ENCODE measurements at regions of chr7 and their contacts with region 1.

Region 1: DNA sequence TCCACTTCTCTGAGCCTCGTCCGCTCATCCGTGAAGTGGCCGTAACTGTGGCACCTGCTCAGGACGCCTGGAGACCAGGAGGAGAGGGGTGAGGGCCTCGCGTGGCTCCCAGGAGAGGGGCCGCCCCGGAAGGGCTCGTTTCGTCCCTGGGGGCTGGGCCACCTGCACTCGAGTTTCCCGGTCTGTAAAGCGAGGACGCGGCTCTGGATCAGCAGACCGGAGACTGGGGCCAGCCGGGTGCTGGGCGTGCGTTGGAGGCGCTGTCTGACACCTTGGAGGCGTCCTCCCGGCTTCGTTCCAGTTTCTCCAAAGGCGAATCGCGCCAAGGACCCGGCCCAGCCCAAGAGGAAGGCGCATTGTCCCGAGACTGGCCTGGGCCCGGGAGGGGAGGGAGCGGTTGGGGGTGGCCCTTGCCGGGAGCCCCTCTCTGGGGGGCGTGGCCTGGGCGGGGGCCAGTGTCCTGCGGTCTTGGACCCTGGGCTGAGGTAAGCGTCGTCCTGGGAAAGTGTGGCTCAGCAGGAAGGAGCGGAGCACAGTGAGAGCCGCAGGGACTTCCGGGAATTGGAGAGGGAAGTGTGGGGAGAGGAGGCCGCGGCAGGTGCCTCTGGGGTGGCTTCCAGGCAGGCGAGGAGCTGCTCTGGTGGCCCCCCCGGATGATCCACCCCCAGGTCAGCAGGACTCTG is 89.6 kb downstream of the FOXL3 start:
- DNase-seq: peak in 3 of 9 donors; percentile 3 to 21 (median 10)
- ATAC-seq: no peak
- H3K4me3 ChIP-seq: peak overlapping the region; percentile 20
- H3K4me3 Mint-ChIP-seq: peak overlapping the region in 9 of 10 donors; percentile 18 to 84 (median 76)
- H3K27ac ChIP-seq: no peak overlapping the region
- H3K27ac Mint-ChIP-seq: peak overlapping the region in 3 of 9 donors; percentile 47 to 60 (median 55)
- H3K4me1 ChIP-seq: peaks cover 19 to 32% of the 10 kb centered on the region in 2 donors
- H3K4me1 Mint-ChIP-seq: peaks cover 17 to 37% (median 23%) of the 10 kb centered on the region in 7 donors
- H3K27me3 ChIP-seq: no peaks in the 10 kb centered on the region
- H3K27me3 Mint-ChIP-seq: peaks cover 0 to 28% (median 0%) of the 10 kb centered on the region in 5 donors

Region 2: GRCh38 chr7:220151-220841 is 159.3 kb before region 1 on chr7:
- CTCF ChIA-PET with region 1: no interaction called
- POLR2A ChIA-PET with region 1: no interaction called
- intact Hi-C with region 1: no loop called
- DNase-seq: no peak
- ATAC-seq: no peak
- H3K4me3 ChIP-seq: no peak overlapping the region
- H3K4me3 Mint-ChIP-seq: no peak overlapping the region
- H3K27ac ChIP-seq: no peak overlapping the region
- H3K27ac Mint-ChIP-seq: no peak overlapping the region
- H3K4me1 ChIP-seq: no peaks in the 10 kb centered on the region
- H3K4me1 Mint-ChIP-seq: peaks cover 0 to 6% (median 0%) of the 10 kb centered on the region in 7 donors
- H3K27me3 ChIP-seq: no peaks in the 10 kb centered on the region
- H3K27me3 Mint-ChIP-seq: no peaks in the 10 kb centered on the region

Region 3: GRCh38 chr7:353746-354325 is 25.8 kb before region 1 on chr7:
- CTCF ChIA-PET with region 1: no interaction called
- POLR2A ChIA-PET with region 1: interaction called, 5 read pairs
- intact Hi-C with region 1: loop called in 1 of 2 experiments (anchors 1 kb)
- DNase-seq: no peak
- ATAC-seq: no peak
- H3K4me3 ChIP-seq: no peak overlapping the region
- H3K4me3 Mint-ChIP-seq: no peak overlapping the region
- H3K27ac ChIP-seq: no peak overlapping the region
- H3K27ac Mint-ChIP-seq: no peak overlapping the region
- H3K4me1 ChIP-seq: peaks cover 10 to 11% of the 10 kb centered on the region in 2 donors
- H3K4me1 Mint-ChIP-seq: peaks cover 10 to 27% (median 21%) of the 10 kb centered on the region in 7 donors
- H3K27me3 ChIP-seq: no peaks in the 10 kb centered on the region
- H3K27me3 Mint-ChIP-seq: peaks cover 0 to 3% (median 0%) of the 10 kb centered on the region in 5 donors

Region 4: GRCh38 chr7:362402-363096 is 17.0 kb before region 1 on chr7:
- CTCF ChIA-PET with region 1: no interaction called
- POLR2A ChIA-PET with region 1: interaction called, 12 read pairs
- intact Hi-C with region 1: loop called in 1 of 2 experiments (anchors 1 kb)
- DNase-seq: peak in 7 of 9 donors; percentile 57 to 70 (median 61)
- ATAC-seq: peak; percentile 68
- H3K4me3 ChIP-seq: peak overlapping the region; percentile 38
- H3K4me3 Mint-ChIP-seq: peak overlapping the region; percentile 71 to 85 (median 76)
- H3K27ac ChIP-seq: peak overlapping the region; percentile 68
- H3K27ac Mint-ChIP-seq: peak overlapping the region; percentile 86 to 98 (median 94)
- H3K4me1 ChIP-seq: peaks cover 29 to 72% of the 10 kb centered on the region in 2 donors
- H3K4me1 Mint-ChIP-seq: peaks cover 52 to 89% (median 73%) of the 10 kb centered on the region in 7 donors
- H3K27me3 ChIP-seq: no peaks in the 10 kb centered on the region
- H3K27me3 Mint-ChIP-seq: peaks cover 0 to 5% (median 0%) of the 10 kb centered on the region in 5 donors

Region 5: DNA sequence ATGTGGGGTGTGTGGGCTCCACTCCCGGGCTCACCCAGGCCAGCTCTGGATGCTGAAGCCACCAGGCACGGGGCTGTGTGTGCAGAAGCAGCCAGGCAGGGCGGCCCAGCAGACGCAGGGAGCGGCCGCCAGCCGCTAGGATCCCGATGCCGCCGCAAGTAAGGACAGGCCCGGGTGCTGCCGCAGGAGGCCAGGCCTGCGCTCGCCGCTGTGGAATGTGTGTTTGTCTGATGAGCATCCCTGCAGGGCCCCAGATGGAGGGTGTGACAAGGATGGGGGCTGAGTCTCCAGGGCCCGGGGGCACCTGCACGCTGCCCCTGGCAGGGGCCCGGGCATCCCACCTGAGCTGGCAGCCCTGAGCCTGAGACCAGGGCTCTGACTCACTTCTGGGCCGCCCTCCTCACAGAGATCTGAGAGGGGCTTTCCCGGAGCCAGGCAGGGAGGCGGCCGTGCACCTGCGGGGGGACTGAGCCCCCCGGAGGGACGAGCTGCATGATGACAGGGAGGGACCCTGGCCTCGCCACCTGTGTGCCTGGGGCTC is 11.9 kb after region 1 on chr7:
- CTCF ChIA-PET with region 1: no interaction called
- POLR2A ChIA-PET with region 1: no interaction called
- intact Hi-C with region 1: no loop called
- DNase-seq: peak in 1 of 9 donors; percentile 3
- ATAC-seq: no peak
- H3K4me3 ChIP-seq: no peak overlapping the region
- H3K4me3 Mint-ChIP-seq: no peak overlapping the region
- H3K27ac ChIP-seq: no peak overlapping the region
- H3K27ac Mint-ChIP-seq: no peak overlapping the region
- H3K4me1 ChIP-seq: no peaks in the 10 kb centered on the region
- H3K4me1 Mint-ChIP-seq: peaks cover 0 to 6% (median 0%) of the 10 kb centered on the region in 7 donors
- H3K27me3 ChIP-seq: no peaks in the 10 kb centered on the region
- H3K27me3 Mint-ChIP-seq: peaks cover 0 to 8% (median 0%) of the 10 kb centered on the region in 5 donors